Tibial artery (tissue), 4 donors: ENCODE measurements at regions of chr3 and their contacts with region 1.

Region 1: DNA sequence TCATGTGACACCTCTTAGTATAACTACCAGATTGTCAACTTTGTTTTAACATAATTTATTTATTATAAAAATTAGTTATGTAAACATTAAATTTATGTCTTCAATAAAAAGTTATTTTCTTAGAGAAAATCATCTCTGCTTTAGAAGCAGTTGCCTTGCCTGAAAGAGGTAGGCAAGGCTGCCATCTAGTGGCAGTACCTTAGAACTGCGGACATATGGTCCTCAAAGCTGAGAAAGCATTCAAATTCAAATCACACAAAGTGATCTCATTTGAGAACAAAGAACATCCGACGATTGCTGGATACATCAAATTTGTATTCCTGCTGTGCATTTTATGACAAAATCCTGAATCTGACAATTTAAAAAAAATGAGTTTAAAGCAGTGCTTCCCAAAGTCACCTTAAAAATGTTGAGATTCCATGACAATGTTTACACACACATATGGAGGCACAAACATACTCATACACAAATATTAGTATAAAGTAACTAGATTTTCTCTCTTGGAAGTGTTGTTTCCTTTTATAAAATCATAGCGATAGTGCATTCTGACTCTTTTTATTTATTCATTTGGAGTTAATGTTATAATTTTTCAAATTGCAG is 617.4 kb downstream of the CADM2 start:
- DNase-seq: peak in 1 of 2 donors; percentile 36
- H3K4me3 ChIP-seq: no peak overlapping the region
- H3K27ac ChIP-seq: no peak overlapping the region
- H3K4me1 ChIP-seq: peaks cover 0 to 3% (median 0%) of the 10 kb centered on the region in 4 donors
- H3K27me3 ChIP-seq: no peaks in the 10 kb centered on the region
- CTCF ChIP-seq: peak; percentile 69 to 87

Region 2: DNA sequence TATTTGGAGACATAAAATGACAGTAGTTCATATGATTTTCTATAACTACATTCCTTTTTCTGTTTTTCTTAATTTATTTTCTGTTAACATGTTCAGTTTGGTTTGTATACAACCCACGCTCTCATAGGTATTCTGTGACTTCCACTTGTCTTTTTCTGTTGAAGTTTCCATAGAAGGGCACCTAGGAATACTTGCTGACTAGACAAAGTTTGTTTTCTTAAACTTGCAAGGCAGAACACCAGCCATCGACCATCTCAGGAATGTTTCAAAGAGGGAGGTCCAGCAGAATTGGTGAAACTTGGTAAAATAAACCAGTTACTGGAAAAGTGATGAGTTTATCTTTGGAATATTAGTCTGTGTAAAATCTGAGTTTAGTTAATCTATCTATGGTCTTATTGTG is 1020.6 kb before region 1 on chr3:
- intact Hi-C with region 1: loop called (anchors 10 kb)
- DNase-seq: no peak
- H3K4me3 ChIP-seq: no peak overlapping the region
- H3K27ac ChIP-seq: no peak overlapping the region
- H3K4me1 ChIP-seq: no peaks in the 10 kb centered on the region
- H3K27me3 ChIP-seq: no peaks in the 10 kb centered on the region
- CTCF ChIP-seq: no peak

Region 3: GRCh38 chr3:85652360-85652759 is 76.2 kb after region 1 on chr3:
- intact Hi-C with region 1: no loop called
- DNase-seq: no peak
- H3K4me3 ChIP-seq: no peak overlapping the region
- H3K27ac ChIP-seq: no peak overlapping the region
- H3K4me1 ChIP-seq: no peaks in the 10 kb centered on the region
- H3K27me3 ChIP-seq: no peaks in the 10 kb centered on the region
- CTCF ChIP-seq: no peak